ENCODE measurements at regions of chr2 and their contacts with region 1.

Region 1: GRCh38 chr2:44715671-44716081 is 225.8 kb upstream of the SIX3 start:
- DNase-seq: no peak

Region 2: DNA sequence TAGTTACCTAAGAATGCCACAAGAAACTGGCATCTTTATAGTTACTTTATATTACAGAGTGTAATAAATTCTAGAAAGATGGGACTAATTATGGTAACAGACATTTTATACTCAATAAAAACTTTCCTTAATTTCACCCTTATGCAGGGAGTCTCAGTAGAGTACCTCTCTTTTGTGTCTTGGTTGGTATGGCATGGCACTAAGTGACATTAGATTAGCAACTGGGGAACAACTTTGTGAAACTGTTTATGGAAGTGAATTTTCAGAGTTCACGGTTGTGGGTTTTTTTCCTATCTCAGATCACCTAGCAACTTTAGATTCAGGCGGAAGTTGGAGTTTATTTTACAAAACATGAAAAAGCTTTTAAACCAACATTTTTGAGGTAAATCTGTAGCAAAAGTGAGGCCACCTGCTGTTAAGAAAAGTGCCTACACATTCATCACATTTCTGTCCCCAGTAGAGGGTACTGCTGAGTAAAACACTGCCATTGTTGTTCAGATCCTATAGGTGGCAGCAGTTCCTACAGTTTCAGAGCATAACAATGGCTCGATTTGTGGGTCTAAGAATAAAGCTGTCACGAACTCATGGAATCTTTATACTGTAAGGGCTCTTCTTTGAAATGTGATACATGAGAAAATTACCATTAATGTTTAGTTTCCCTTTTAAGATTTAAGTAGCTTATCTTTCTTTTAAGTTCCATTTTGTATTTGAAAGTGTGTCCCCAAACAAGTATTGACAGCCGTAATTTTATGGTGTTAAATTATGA is 236.4 kb before region 1 on chr2:
- intact Hi-C with region 1: loop called (anchors 2 kb)
- DNase-seq: peak in 2 of 10 donors; percentile 4 to 24

Measured in posterior cingulate gyrus (tissue), 11 donors.